Colonic mucosa (tissue), 4 donors: ENCODE measurements at regions of chr22 and their contacts with region 1.

Region 1: GRCh38 chr22:24951942-24952836 is at the start of gene KIAA1671:
- DNase-seq: peak; percentile 91
- H3K4me3 ChIP-seq: peak within 1 kb of the TSS; percentile 67
- H3K27ac ChIP-seq: peak within 1 kb of the TSS; percentile 89
- H3K4me1 ChIP-seq: no peaks in the 10 kb centered on the region
- H3K27me3 ChIP-seq: peaks cover 4% of the 10 kb centered on the region
- CTCF ChIP-seq: peak; percentile 99
- total RNA-seq, gene KIAA1671: 82.5 to 94.3 TPM

Region 2: DNA sequence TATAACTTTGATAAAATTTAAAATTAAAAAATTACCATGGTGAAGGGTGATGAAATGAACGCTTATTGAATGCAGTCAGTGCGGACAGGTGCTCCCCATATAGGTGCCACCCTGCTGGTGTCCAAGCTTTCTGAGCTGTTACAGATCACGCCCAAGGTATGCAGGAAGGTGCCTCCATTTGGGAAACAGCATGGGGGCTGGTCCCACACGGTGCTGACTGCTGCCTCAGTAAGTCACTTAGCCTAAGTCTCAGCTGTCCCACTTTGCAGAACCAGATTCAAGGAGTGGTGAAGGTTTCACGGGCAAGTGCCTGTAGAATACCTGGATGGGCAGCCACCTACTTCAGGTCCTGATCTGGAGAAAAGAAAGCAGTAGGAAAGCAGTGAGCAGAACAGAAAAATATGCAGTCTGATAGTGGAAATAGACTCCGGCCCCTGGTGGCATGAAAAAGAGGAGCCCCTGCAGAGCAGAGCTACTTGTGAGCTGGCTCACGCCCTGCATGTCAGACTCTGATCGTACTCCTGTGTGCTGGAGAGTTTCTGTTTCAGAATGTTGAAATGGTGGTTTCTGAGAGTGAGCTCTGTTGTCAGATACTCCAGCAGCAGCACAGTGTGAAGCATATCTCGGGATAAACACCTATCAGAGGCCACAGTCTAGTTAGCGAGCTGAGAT is 491.6 kb before region 1 on chr22:
- intact Hi-C with region 1: no loop called
- DNase-seq: no peak
- H3K4me3 ChIP-seq: no peak overlapping the region
- H3K27ac ChIP-seq: no peak overlapping the region
- H3K4me1 ChIP-seq: no peaks in the 10 kb centered on the region
- H3K27me3 ChIP-seq: no peaks in the 10 kb centered on the region
- CTCF ChIP-seq: no peak

Region 3: GRCh38 chr22:24681236-24681635 is 271.0 kb before region 1 on chr22:
- intact Hi-C with region 1: no loop called
- DNase-seq: no peak
- H3K4me3 ChIP-seq: no peak overlapping the region
- H3K27ac ChIP-seq: no peak overlapping the region
- H3K4me1 ChIP-seq: no peaks in the 10 kb centered on the region
- H3K27me3 ChIP-seq: no peaks in the 10 kb centered on the region
- CTCF ChIP-seq: no peak

Region 4: DNA sequence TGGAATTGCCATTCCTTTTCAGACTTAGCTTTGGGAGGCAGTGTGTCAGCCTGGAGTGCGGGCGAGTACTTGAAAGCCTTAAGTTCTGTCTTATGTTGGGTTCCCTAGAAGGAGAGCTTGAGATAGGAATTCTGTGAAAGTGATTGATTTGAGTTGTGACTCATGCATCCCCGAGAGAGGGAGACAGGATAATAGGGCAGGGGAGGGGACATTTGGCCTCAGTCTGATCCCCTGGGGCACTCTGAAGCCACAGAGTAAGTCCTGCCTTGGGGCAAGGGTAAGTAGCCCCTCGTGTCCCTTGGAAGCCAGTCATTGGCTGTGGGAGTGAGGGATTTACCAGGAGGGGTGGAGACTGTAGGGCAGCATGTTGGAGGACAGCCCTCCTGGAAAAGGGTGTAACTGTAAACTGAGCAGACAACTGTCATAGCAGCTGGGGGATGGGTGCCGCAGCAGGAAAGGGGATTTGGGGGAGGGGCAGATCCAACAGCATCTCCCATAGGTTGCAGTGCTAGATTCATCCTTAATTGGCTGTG is 44.3 kb after region 1 on chr22:
- intact Hi-C with region 1: loop called (anchors 5 kb)
- DNase-seq: peak; percentile 68
- H3K4me3 ChIP-seq: no peak overlapping the region
- H3K27ac ChIP-seq: peak overlapping the region; percentile 27
- H3K4me1 ChIP-seq: peaks cover 12% of the 10 kb centered on the region
- H3K27me3 ChIP-seq: no peaks in the 10 kb centered on the region
- CTCF ChIP-seq: no peak